HEK293 (cell line): ENCODE measurements at regions of chr6 and their contacts with region 1.

Region 1: GRCh38 chr6:30742316-30743098 is at the start of gene FLOT1:
- H3K4me3 ChIP-seq: peak within 1 kb of the TSS; percentile 67
- H3K27ac ChIP-seq: peak within 1 kb of the TSS; percentile 94
- H3K4me1 ChIP-seq: no peaks in the 10 kb centered on the region
- CTCF ChIP-seq: no peak

Region 2: GRCh38 chr6:30678964-30679726 is 63.4 kb before region 1 on chr6:
- CTCF ChIA-PET with region 1: interaction called, 11 read pairs
- POLR2A ChIA-PET with region 1: interaction called, 5 read pairs
- H3K4me3 ChIP-seq: no peak overlapping the region
- H3K27ac ChIP-seq: no peak overlapping the region
- H3K4me1 ChIP-seq: peaks cover 19% of the 10 kb centered on the region
- CTCF ChIP-seq: peak; percentile 90

Region 3: DNA sequence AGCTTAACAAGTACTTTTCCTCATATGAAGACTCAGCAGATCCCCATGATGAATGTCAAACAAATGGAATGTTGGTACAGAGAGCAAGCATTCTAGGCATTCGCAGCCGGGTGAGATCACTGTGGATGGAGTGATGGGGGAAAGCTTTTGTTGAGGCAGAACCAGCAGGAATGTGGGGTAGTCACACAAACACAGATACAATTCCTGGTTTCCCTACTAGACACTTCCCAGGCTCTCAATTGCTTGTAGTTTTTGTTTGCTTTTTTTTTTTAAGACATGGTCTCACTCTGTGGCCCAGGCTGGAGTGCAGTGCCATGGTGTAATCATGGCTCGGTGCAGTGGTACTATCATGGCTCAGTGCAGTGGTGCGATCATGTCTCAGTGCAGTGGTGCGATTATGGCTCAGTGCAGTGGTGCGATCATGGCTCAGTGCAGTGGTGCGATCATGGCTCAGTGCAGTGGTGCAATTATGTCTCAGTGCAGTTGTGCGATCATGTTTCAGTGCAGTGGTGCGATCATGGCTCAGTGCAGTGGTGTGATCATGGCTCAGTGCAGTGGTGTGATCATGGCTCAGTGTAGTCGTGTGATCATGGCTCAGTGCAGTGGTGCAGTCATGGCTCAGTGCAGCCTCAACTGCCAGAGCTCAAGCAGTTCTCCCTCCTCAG is 17.2 kb after region 1 on chr6:
- CTCF ChIA-PET with region 1: interaction called, 5 read pairs
- POLR2A ChIA-PET with region 1: interaction called, 37 read pairs
- H3K4me3 ChIP-seq: no peak overlapping the region
- H3K27ac ChIP-seq: no peak overlapping the region
- H3K4me1 ChIP-seq: peaks cover 13% of the 10 kb centered on the region
- CTCF ChIP-seq: no peak

Region 4: GRCh38 chr6:30769088-30769852 is 26.8 kb after region 1 on chr6:
- CTCF ChIA-PET with region 1: interaction called, 7 read pairs
- POLR2A ChIA-PET with region 1: interaction called, 49 read pairs
- H3K4me3 ChIP-seq: peak overlapping the region; percentile 19
- H3K27ac ChIP-seq: peak overlapping the region; percentile 72; the same call in 1 of the 2 replicates
- H3K4me1 ChIP-seq: peaks cover 18% of the 10 kb centered on the region
- CTCF ChIP-seq: no peak

Region 5: GRCh38 chr6:30781743-30782424 is 39.4 kb after region 1 on chr6:
- CTCF ChIA-PET with region 1: interaction called, 3 read pairs
- POLR2A ChIA-PET with region 1: interaction called, 26 read pairs
- H3K4me3 ChIP-seq: peak overlapping the region; percentile 33
- H3K27ac ChIP-seq: peak overlapping the region; percentile 65
- H3K4me1 ChIP-seq: peaks cover 10% of the 10 kb centered on the region; the same call in 1 of the 2 replicates
- CTCF ChIP-seq: no peak